Posterior cingulate gyrus (tissue), 11 donors: ENCODE measurements at regions of chr15 and their contacts with region 1.

Region 1: DNA sequence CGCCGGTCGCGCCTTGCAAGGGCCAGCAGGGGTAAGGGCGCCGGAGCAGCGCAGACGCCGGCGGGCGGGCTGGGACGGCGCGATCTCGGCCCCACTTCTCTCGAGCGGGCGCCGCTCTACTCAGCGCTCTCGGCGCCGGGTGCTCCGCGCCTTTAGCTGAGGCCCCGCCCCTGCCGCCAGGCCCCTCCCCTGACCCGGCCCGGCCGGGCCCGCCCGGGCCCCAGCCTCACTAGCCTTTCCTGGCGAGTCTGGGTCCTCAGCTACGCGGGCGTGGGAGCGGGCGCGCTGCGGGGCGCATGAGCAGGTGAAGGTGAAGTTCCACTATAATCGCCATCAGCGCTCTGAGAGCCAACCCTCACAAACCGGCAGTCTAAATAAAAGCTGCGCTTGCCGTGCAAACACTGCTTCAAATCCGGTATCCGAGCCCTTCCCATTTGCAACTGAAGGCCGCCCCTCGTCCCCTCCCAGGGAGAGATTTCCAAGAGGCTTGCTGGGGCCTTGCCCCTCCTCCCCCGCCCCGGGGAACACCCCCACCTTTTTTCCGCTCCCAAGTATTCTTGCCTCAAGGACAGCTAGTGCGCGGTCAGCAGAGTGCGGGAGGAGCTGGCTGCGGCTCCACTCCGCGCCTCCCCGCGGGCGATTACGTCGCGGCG is at the start of gene RPP25:
- DNase-seq: peak; percentile 46 to 92 (median 66)

Region 2: DNA sequence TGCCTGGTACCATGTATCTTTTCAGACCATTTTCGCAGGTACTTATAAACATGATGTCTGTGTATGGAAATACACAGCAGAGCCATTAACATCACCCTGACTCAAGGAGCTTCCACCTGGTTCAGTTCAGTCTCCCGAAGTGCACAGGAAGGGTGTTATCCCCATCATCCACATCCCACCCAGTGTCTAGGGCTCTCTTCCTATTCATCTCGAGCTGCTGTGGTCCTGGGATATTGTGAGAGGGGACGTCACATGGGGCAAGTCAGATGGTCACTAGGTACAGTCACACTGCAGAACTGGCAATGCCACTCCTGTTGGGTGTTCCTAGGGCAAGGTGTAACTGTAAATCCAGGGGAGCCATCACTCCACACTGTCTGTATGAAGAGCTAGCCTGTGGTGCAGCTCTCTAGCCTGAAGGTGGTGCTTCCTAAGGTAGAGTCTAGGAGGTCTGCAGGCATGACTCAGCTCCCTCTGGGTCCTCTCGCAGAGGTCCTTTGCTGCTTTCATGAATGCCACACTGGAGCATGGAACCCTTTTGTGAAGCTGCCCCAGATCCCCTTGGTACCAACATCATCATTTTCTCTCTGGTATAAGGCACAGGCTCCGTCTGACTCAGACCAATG is 812.5 kb before region 1 on chr15:
- intact Hi-C with region 1: no loop called
- DNase-seq: no peak

Region 3: GRCh38 chr15:74635228-74635627 is 321.5 kb before region 1 on chr15:
- intact Hi-C with region 1: loop called (anchors 10 kb)
- DNase-seq: peak in 9 of 10 donors; percentile 59 to 95 (median 73)

Region 4: DNA sequence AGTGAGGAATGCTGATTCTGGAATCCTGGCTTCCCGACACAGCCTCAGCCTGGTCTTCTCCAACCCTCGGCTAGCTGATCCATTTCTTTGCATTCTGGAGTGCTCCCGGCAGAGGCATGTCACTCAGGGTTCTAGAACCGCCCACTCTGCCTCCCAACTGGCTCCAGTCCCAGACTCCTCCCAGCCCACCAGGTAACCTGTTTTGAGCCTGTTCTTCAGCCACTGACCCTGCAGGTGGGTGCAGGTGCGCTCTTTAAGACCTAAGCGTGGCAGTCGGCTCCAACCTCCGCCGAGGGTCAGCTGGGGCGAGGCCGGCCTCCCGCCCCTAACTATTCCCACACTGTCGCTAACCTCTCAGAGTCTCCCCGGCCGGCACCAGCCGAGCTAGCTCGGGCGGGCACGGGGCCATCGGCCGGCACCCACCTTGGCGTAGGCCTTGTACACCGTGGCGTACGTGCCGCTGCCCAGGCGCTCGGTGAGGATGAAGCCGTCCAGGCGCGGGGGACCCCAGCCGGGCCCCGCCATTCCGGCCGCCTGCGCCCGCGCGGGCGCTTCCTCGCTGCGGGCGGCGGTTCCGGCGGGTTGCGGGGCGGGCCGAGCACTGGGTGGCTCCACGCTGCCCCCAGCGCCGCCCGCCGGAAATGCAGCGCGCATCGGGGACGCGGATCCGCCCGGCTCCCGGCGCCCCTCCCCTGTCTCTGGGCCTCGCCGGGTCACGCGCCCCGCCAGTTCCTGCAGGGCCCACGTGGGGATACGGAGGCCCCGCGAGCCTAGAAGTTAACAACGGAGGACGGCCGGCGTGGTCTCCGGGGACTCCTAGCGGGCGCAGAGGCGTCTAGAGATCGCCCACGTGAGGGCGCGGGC is 114.0 kb before region 1 on chr15 and contains the start of gene ULK3:
- intact Hi-C with region 1: no loop called
- DNase-seq: peak; percentile 86 to 99 (median 92)

Region 5: DNA sequence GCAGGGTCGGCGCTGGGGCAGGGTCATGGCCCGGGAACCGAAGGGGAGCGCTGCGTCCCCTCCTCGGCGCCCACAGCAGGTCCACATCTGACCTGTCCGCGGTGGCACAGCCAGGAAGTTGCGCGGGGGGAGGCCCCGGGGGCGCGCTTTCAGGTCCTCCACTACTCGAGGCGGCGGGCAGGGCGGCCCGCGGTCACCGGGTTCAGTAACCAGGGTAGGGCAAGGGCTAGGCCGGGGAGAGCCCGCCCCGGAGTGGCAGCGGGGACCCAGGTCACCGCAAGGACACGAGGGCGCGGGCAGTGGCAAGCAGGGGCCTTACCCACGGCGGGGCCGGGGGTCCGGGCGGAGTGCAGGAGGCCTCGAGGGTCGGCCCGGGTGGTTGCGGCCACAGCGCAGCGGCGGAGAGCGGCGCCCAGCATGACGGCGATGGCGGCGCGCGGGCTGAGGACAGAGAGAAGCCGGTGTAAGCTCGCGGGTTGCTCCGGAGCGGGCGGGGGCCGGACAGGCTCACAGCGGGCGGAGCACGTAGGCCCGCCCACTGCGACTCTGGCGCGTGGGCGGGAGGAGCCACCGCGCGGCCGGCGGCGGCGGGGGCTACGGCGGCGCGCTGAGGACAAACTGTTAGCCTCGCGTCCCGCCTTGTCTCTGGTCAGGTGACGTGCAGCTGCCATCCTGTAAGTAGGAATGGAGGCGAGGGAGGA is 19.0 kb before region 1 on chr15 and contains the start of gene COX5A:
- intact Hi-C with region 1: loop called (anchors 2 kb)
- DNase-seq: peak; percentile 89 to 99 (median 91)

Region 6: GRCh38 chr15:74994236-74994635 is 37.5 kb after region 1 on chr15:
- intact Hi-C with region 1: loop called (anchors 1 kb)
- DNase-seq: peak in 8 of 10 donors; percentile 11 to 91 (median 37)

Region 7: DNA sequence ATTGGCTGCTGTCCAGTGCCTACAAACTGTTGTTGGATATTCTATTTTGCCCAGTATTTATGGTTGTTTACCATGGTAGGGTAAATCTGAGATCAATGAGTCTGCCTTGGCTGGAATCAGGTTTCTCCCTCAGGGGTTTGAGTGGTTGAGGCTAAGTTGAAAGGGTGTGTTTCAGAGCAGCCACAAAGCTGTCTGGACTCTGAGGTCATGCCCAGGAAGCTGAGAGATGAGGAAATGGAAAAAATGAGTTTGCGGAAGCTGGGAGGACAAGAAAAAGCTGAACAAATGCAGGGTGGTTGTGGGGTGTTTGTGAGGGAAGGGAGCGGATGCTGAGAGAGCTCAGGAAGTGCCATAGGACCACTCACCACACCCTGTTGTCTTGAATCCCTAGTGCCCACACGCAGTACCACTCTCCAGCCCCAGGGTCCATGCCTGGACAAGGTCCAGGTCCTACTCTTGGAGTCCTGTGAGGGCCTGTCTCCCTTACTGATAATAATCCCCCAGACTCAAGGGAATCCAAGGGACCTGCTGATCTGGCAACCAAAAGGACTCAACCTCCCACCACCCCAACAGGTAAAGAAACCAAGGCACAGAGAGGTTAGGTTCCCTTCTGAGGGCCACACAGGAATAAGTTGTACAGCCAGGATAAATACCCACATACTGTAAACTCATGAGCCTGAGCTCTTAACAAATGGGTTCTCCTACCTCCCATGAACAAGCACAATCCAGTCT is 148.2 kb after region 1 on chr15:
- intact Hi-C with region 1: no loop called
- DNase-seq: no peak